ENCODE measurements at regions of chr13 and their contacts with region 1.

Region 1: DNA sequence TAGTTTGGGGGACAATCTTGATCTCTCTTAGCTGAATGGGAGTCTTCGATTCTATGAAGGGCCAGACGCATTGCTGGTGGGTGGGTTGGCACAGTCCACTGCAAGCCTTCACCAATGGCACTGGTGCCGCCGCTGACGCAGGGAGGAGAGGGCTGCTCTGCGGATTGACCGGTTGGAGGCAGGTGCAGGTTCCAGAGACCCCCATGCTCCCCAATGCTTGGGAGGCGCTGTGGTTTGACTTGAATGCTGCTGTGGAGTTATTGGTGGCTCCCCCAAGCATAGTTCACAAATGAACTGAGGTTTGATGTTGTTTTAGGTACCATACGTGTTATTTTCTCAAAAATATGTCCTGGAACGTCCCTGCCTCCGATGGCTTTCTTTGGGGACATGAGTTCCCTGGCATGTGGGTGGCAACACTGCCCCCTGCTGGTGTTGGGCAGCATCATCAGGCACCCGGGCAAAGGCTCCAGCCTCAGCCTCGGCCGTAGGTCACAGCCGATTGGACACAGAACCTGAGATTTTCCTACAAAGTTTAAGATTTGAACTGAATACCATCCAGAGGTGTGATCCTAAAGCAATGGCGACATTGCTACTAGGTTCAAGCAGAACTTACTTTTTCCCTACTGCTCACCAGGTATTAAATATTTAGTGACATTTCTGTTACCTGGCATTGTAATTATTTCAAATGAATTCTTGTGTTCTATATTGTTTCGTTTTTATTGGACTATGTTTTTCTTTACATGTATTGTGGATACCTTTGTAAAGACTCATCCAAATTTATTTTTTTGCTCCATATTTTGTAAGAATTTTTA is 95.5 kb downstream of the ANKRD10 start:
- DNase-seq: peak in 1 of 2 donors; percentile 82
- H3K4me3 ChIP-seq: no peak overlapping the region
- H3K27ac ChIP-seq: no peak overlapping the region
- H3K4me1 ChIP-seq: no peaks in the 10 kb centered on the region
- H3K27me3 ChIP-seq: no peaks in the 10 kb centered on the region
- CTCF ChIP-seq: peak; percentile 87 to 96 (median 94)
- POLR2A ChIP-seq: no peak

Region 2: GRCh38 chr13:110593430-110594130 is 225.8 kb before region 1 on chr13:
- intact Hi-C with region 1: loop called (anchors 10 kb)
- DNase-seq: no peak
- H3K4me3 ChIP-seq: no peak overlapping the region
- H3K27ac ChIP-seq: no peak overlapping the region
- H3K4me1 ChIP-seq: peaks cover 4% of the 10 kb centered on the region
- H3K27me3 ChIP-seq: no peaks in the 10 kb centered on the region
- CTCF ChIP-seq: peak; percentile 28 to 81 (median 60)
- POLR2A ChIP-seq: no peak

Region 3: GRCh38 chr13:110705826-110706569 is 113.4 kb before region 1 on chr13 and contains the start of gene CARS2:
- intact Hi-C with region 1: loop called (anchors 10 kb)
- DNase-seq: peak in 1 of 2 donors; percentile 97
- H3K4me3 ChIP-seq: peak within 1 kb of the TSS; percentile 72 to 95
- H3K27ac ChIP-seq: peak within 1 kb of the TSS; percentile 65
- H3K4me1 ChIP-seq: peaks cover 42% of the 10 kb centered on the region
- H3K27me3 ChIP-seq: no peaks in the 10 kb centered on the region
- CTCF ChIP-seq: peak in 1 of 3 experiments; percentile 23
- POLR2A ChIP-seq: peak in 1 of 2 donors; percentile 79
- total RNA-seq, gene CARS2: 65.1 TPM

Region 4: GRCh38 chr13:110784704-110785103 is 34.7 kb before region 1 on chr13:
- intact Hi-C with region 1: no loop called
- DNase-seq: no peak
- H3K4me3 ChIP-seq: no peak overlapping the region
- H3K27ac ChIP-seq: no peak overlapping the region
- H3K4me1 ChIP-seq: no peaks in the 10 kb centered on the region
- H3K27me3 ChIP-seq: no peaks in the 10 kb centered on the region
- CTCF ChIP-seq: no peak
- POLR2A ChIP-seq: no peak

Measured in vagina (tissue), 2 donors.